ENCODE measurements at regions of chr2 and their contacts with region 1.

Region 1: DNA sequence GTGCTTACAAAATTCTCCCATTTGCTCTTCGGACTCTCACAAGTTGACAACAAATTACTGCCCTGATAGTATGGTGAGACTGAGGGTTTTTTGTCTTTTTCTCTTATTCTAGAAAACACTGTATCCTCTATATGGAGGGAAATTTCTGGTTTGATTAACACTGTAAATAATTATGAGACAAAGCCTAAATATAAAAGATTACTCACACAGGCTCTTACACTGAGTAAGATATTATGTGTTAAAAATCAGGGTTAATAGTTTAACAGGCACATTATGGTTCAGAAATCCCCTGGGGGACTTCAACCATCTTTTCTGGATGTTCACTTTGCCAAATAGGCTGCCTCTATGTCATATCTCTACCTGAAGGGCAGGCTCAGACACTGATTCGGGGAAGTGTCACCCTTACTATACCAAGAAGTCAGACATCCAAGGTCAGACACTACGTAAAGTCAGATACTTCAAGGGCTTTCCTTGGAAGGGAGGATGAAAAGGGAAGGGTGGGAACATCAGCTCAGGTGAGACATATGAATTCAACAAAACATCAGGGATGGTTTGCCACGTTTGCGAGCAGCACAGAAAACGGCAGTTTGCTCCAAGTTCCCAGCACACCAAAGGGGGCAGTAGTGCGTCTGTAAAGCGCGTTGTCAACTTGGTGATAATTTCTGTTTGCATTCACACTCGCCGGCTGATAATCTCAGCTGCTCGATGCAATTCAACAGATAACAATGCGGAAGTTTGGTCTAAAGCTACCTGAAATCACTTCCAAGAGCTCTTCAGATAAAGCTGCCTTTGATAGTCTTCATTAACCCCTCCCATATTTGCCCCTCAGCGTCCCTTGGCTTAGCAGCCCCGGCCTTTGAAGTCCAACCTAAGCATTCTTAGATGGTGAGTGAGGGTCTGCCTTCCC is 972 bp upstream of the RASGRP3 start:
- DNase-seq: peak; percentile 87
- ATAC-seq: peak; percentile 88
- H3K4me3 ChIP-seq: peak overlapping the region; percentile 80 to 94
- H3K27ac ChIP-seq: peak overlapping the region; percentile 71
- H3K4me1 ChIP-seq: no peaks in the 10 kb centered on the region; the same call in 1 of the 2 replicates
- H3K27me3 ChIP-seq: no peaks in the 10 kb centered on the region
- CTCF ChIP-seq: peak; percentile 92

Region 2: DNA sequence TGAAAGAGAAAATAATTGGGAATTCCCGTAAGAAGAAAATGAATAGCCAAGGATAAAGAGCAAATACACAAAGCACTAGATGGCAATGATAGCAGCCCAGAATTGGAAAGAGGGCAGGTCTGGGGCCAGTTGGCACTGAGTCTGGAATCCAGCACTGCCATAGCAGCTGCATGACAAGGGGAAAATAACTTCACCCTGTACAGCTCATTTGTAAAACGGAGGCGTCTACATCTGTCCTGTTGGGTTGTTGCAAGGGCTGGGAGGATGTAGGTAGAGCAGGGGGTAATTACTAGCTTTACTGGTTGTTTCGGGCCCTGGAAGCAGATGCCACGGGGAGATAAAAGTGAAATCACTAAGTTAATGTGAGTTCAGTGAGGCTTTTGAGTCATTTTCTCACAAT is 109.0 kb before region 1 on chr2:
- CTCF ChIA-PET with region 1: no interaction called
- POLR2A ChIA-PET with region 1: no interaction called
- in situ Hi-C with region 1: no loop called
- intact Hi-C with region 1: no loop called
- DNase-seq: no peak
- ATAC-seq: no peak
- H3K4me3 ChIP-seq: no peak overlapping the region
- H3K27ac ChIP-seq: no peak overlapping the region
- H3K4me1 ChIP-seq: no peaks in the 10 kb centered on the region
- H3K27me3 ChIP-seq: no peaks in the 10 kb centered on the region
- CTCF ChIP-seq: no peak

Region 3: GRCh38 chr2:33437815-33438214 is 37.7 kb before region 1 on chr2:
- CTCF ChIA-PET with region 1: no interaction called
- POLR2A ChIA-PET with region 1: interaction called, 11 read pairs
- in situ Hi-C with region 1: no loop called
- intact Hi-C with region 1: no loop called
- DNase-seq: no peak
- ATAC-seq: no peak
- H3K4me3 ChIP-seq: no peak overlapping the region
- H3K27ac ChIP-seq: no peak overlapping the region
- H3K4me1 ChIP-seq: no peaks in the 10 kb centered on the region
- H3K27me3 ChIP-seq: no peaks in the 10 kb centered on the region; the same call in 1 of the 2 replicates
- CTCF ChIP-seq: no peak

Region 4: DNA sequence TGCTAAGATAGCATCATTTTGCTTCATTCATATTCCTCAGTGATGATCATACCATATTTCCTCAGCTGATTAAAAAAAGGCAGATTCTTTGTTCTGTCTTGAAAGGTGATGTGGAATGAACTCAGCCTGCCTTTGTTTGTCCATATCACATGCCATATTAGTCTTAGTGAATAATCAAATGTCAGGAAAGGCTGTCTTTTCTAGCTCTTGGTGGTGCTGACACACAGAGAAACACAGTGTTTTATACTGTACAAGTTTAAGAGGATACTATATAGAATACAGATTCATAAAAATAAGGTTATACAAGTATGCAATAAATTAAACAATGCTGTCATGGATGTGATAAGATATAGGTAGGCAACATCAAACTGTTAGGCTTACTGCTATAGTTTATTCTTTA is 220.8 kb after region 1 on chr2:
- CTCF ChIA-PET with region 1: no interaction called
- POLR2A ChIA-PET with region 1: no interaction called
- in situ Hi-C with region 1: no loop called
- intact Hi-C with region 1: no loop called
- DNase-seq: no peak
- ATAC-seq: no peak
- H3K4me3 ChIP-seq: no peak overlapping the region
- H3K27ac ChIP-seq: no peak overlapping the region
- H3K4me1 ChIP-seq: no peaks in the 10 kb centered on the region
- H3K27me3 ChIP-seq: no peaks in the 10 kb centered on the region
- CTCF ChIP-seq: no peak